K562 (cell line): ENCODE measurements at regions of chr1 and their contacts with region 1.

Region 1: GRCh38 chr1:147292631-147293251 is 50.3 kb downstream of the CHD1L start:
- DNase-seq: no peak
- ATAC-seq: no peak
- H3K4me3 ChIP-seq: no peak overlapping the region
- H3K27ac ChIP-seq: no peak overlapping the region
- H3K4me1 ChIP-seq: no peaks in the 10 kb centered on the region
- H3K27me3 ChIP-seq: no peaks in the 10 kb centered on the region
- CTCF ChIP-seq: no peak
- EP300 ChIP-seq: no peak
- POLR2A ChIP-seq: no peak
- RAD21 ChIP-seq: no peak

Region 2: DNA sequence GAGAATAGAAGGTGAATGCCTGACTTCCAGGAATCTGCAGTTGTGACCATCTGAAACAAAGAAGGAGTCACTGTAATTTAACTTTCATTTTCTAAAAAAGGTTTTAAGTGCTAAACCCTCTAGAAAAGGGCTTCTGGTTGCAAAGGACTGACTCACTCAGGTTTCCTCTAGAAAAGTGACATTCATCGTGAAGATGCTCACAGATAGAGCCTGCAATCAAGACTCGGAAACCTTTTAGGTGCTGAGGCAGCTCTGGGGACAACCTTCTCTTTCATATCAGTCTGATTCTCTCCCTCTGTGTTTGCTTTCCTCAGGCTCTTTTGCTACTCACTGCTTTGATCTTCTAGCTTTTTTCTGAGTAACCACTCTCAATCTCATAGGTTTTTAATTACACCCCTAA is 256.8 kb after region 1 on chr1:
- CTCF ChIA-PET with region 1: no interaction called
- POLR2A ChIA-PET with region 1: no interaction called
- in situ Hi-C with region 1: no loop called
- intact Hi-C with region 1: no loop called
- DNase-seq: no peak
- ATAC-seq: no peak
- H3K4me3 ChIP-seq: no peak overlapping the region
- H3K27ac ChIP-seq: no peak overlapping the region
- H3K4me1 ChIP-seq: no peaks in the 10 kb centered on the region
- H3K27me3 ChIP-seq: peaks cover 4 to 8% of the 10 kb centered on the region in 2 experiments; a peak in 4 of 5 replicates
- CTCF ChIP-seq: no peak
- EP300 ChIP-seq: no peak
- POLR2A ChIP-seq: no peak
- RAD21 ChIP-seq: no peak

Region 3: DNA sequence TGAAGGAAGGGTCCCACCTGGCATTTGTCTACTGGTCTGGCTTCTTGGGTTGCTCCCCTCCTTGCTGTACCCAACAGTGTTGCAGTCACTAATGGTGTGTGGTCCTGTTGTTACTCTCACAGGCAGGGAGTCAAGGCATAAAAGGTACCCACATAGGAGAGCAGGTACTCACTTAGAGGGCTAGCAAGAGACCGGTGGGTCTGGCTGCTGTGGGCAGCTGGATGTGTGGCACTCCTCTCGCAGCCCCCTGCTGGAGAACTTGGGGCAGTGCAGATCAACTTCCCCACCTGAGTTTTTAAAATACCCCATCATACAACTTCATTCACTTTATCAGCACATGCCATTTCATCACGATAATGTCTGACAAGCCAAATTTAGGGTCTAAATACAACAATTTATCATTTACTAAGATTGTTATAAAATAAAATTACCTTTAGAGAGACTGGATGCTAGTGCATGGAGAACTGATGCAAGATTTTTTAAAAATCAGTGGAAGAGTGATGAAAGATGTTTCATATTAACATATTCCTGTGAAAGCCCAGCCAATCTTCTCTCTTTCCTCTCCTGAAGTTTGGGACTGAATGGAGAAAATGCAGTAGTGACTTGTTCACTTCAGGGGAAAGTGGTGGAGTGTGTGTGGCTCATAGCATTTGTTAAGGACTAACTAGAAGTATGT is 334.8 kb after region 1 on chr1:
- CTCF ChIA-PET with region 1: no interaction called
- POLR2A ChIA-PET with region 1: no interaction called
- in situ Hi-C with region 1: loop called (anchors 10 kb)
- intact Hi-C with region 1: no loop called
- DNase-seq: peak; percentile 52 to 79 (median 78)
- ATAC-seq: peak; percentile 85
- H3K4me3 ChIP-seq: no peak overlapping the region
- H3K27ac ChIP-seq: no peak overlapping the region
- H3K4me1 ChIP-seq: no peaks in the 10 kb centered on the region; a peak in 1 of 5 replicates
- H3K27me3 ChIP-seq: peaks cover 0 to 18% of the 10 kb centered on the region in 2 experiments; a peak in 2 of 5 replicates
- CTCF ChIP-seq: peak; percentile 71 to 88 (median 74)
- EP300 ChIP-seq: no peak
- POLR2A ChIP-seq: no peak
- RAD21 ChIP-seq: peak; percentile 50 to 67